ENCODE measurements at regions of chr12 and their contacts with region 1.

Region 1: GRCh38 chr12:75480469-75480949 is at the start of gene GLIPR1:
- DNase-seq: peak; percentile 86
- ATAC-seq: peak; percentile 83
- H3K4me3 Mint-ChIP-seq: peak within 1 kb of the TSS; percentile 93
- H3K27ac Mint-ChIP-seq: peak within 1 kb of the TSS; percentile 89
- H3K4me1 Mint-ChIP-seq: peaks cover 90% of the 10 kb centered on the region
- H3K27me3 Mint-ChIP-seq: no peaks in the 10 kb centered on the region
- total RNA-seq, gene GLIPR1: 8.7 to 9.3 TPM

Region 2: DNA sequence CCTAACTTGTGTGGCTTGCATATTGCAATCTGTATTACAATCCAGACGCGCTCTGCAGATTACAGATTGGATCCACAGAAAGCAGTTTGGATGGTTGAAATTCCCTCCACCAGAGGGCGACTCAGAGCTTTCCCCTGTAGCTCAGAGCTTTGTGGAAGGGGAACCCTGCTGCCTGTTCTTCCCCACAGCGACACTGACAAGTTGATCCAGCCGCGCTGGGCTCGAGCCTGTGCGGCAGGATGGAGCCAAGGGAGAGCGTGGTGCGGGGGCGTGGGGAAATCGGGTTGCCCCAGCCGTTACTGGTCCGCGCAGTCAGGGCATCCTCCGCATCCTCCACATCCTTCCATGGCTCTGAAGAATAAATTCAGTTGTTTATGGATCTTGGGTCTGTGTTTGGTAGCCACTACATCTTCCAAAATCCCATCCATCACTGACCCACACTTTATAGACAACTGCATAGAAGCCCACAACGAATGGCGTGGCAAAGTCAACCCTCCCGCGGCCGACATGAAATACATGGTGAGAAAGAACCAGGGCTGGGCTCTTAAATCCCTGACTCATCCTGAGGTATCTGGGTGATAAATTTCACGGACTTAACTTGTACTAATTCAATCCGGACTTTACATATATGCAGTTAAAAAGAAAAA is 146.0 kb before region 1 on chr12 and contains the start of gene GLIPR1L1:
- CTCF ChIA-PET with region 1: interaction called, 15 read pairs
- POLR2A ChIA-PET with region 1: interaction called, 3 read pairs
- intact Hi-C with region 1: loop called (anchors 2 kb)
- DNase-seq: peak; percentile 91
- ATAC-seq: peak; percentile 82
- H3K4me3 Mint-ChIP-seq: peak within 1 kb of the TSS; percentile 61
- H3K27ac Mint-ChIP-seq: no peak within 1 kb of the TSS
- H3K4me1 Mint-ChIP-seq: peaks cover 25% of the 10 kb centered on the region
- H3K27me3 Mint-ChIP-seq: peaks cover 21% of the 10 kb centered on the region
- total RNA-seq, gene GLIPR1L1: not detected

Region 3: DNA sequence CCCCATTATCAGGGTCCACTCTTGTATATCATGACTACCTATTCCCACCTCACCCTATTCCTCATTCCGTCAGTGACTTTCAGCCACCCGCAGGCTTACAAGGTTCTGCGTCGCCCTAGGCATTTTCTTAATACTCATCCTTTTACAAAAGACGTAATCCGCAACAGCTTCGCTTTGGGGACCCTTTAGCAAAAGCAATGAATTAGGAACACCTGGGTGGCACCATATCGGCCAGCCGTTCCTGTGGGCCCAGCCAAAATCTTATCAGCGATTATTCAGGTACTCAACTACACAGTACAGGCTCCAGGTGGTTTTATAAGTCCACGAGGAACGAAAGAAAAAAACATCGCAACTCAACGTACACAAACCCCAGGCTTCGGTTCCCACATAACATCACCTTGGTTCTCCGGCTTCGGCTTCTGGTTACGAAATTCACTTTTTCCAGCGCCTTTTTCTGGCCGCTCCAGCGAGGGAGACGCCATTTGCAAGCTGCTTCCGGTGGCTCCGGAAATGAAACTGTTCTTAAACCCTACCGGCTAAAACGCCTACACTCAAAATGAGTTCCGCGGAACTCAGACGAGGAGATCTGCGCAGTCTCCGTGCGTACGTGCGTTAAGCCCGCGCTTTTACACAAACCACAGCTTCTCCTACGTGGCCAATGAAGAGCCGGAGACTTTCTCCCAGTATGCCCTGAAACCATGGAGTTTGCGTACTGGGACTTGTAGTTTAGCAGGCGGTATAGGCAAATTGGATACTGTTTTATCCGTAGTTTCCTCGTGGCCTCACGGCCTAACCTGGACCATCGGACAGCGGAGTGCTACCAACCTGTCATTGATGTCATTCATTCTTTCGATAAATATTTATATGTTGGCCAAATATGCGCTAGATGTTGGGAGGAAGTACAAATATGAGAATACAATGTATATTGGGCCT is 30.9 kb after region 1 on chr12 and contains the start of gene KRR1:
- CTCF ChIA-PET with region 1: interaction called, 35 read pairs
- POLR2A ChIA-PET with region 1: interaction called, 9 read pairs
- intact Hi-C with region 1: loop called (anchors 1 kb)
- DNase-seq: peak; percentile 94
- ATAC-seq: peak; percentile 96
- H3K4me3 Mint-ChIP-seq: peak within 1 kb of the TSS; percentile 100
- H3K27ac Mint-ChIP-seq: peak within 1 kb of the TSS; percentile 99
- H3K4me1 Mint-ChIP-seq: peaks cover 33% of the 10 kb centered on the region
- H3K27me3 Mint-ChIP-seq: no peaks in the 10 kb centered on the region
- total RNA-seq, gene KRR1: 122 to 147 TPM

Region 4: DNA sequence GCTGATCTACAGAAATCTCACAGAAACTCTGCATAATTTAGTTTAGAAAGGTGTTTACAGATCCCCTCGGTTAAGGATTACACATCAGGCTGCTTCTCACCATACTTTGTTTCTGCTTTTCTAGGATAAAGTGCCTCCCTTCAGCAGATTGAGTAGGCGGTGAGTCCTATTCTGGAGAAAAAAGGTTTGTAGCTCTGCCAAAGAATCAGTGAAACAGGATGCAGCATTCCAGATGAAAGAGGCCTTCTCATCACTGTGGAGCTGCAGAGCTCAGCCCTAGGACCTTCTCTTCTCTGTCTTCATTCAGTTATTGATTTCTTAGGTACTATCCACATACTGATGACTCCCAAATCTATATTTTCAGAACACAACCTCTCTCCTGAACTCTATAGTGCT is 186.4 kb after region 1 on chr12:
- CTCF ChIA-PET with region 1: no interaction called
- POLR2A ChIA-PET with region 1: no interaction called
- intact Hi-C with region 1: no loop called
- DNase-seq: no peak
- ATAC-seq: no peak
- H3K4me3 Mint-ChIP-seq: no peak overlapping the region
- H3K27ac Mint-ChIP-seq: no peak overlapping the region
- H3K4me1 Mint-ChIP-seq: no peaks in the 10 kb centered on the region
- H3K27me3 Mint-ChIP-seq: no peaks in the 10 kb centered on the region

Region 5: GRCh38 chr12:75837700-75838099 is 357.2 kb after region 1 on chr12:
- CTCF ChIA-PET with region 1: no interaction called
- POLR2A ChIA-PET with region 1: no interaction called
- intact Hi-C with region 1: no loop called
- DNase-seq: no peak
- ATAC-seq: no peak
- H3K4me3 Mint-ChIP-seq: no peak overlapping the region
- H3K27ac Mint-ChIP-seq: no peak overlapping the region
- H3K4me1 Mint-ChIP-seq: peaks cover 7% of the 10 kb centered on the region
- H3K27me3 Mint-ChIP-seq: peaks cover 8% of the 10 kb centered on the region

Region 6: GRCh38 chr12:75933101-75933500 is 452.6 kb after region 1 on chr12:
- CTCF ChIA-PET with region 1: no interaction called
- POLR2A ChIA-PET with region 1: interaction called, 3 read pairs
- intact Hi-C with region 1: loop called (anchors 1 to 2 kb)
- DNase-seq: no peak
- ATAC-seq: no peak
- H3K4me3 Mint-ChIP-seq: no peak overlapping the region
- H3K27ac Mint-ChIP-seq: peak overlapping the region; percentile 3
- H3K4me1 Mint-ChIP-seq: peaks cover 26% of the 10 kb centered on the region
- H3K27me3 Mint-ChIP-seq: peaks cover 17% of the 10 kb centered on the region

Region 7: DNA sequence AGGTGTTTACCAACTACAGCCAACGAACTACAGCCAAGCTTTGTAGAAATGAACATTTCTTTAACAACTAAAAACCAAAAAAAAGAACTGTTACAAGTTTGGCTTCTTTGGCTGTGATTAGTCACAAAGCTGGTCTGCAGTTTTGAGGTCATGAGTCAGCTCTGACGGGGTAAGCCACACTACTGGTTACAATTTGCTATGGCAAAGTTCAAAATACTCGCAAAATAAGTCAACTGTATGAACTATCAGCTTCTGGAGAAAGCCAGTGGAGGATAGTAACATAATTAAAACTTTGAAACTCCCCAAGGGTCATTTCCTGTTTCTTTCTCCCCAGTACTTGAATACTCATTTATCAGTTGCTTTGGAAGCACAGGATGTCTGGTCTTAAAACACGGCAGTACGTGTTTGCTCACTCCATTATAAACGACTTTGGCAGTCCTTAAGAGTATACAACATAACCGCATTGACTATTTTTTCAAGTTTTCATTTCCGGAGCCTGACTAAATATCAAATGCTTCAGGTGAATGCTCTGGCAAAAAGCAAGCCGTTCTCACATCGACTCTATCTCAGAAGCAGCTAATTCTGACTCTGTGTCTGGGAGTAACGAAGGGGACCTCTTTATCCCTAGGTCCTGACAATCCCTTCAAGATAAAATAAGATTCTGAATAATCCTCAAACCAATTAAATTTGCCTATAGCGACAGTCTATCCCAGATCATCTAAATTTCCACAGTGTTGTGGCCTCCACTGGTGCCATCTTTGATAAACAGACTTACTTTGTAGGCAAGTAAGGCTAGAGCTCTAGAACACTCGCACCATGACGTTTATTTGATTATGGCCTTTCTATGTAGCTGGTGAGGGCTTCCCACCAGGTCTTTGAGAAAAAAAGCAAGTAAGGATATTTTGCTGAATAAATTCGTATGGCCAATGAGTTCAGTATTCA is 540.5 kb after region 1 on chr12:
- CTCF ChIA-PET with region 1: interaction called, 4 read pairs
- POLR2A ChIA-PET with region 1: interaction called, 8 read pairs
- intact Hi-C with region 1: loop called (anchors 1 kb)
- DNase-seq: peak; percentile 88
- ATAC-seq: peak; percentile 79
- H3K4me3 Mint-ChIP-seq: peak overlapping the region; percentile 54
- H3K27ac Mint-ChIP-seq: peak overlapping the region; percentile 99
- H3K4me1 Mint-ChIP-seq: peaks cover 56% of the 10 kb centered on the region
- H3K27me3 Mint-ChIP-seq: peaks cover 1% of the 10 kb centered on the region

Region 8: DNA sequence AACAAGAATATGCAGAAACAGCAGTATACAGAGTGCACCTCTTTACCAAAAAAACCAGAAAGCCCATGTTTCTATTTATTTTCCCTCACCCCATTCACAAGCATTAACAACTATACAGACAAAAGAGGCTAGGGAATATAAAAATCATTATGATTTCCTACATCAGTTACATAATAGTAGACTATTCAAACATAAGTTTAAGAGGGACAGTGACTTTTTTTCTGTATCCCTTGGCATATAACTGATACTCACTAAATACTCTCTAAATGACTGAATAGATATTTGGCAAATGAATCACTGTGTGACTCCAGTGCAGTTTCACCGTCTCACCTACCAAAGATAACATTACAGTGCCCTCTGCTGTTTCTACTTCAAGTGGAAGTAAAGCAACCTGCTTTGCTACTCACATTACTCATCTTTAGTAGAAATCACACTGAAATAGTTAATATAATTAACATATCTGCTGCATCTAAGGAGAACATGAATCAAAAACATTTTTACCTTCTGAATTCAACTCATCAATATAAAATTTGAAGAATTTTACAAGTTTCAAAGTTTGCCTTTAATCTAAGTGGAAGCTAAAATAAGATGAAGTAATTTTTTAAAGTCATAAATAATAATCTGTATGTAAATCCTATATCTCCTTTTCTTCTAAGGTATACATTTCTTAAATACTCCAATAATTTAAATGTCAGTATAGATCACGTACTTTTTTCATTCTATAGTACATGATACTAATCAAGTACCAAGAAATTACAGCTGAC is 975.3 kb after region 1 on chr12:
- CTCF ChIA-PET with region 1: interaction called, 8 read pairs
- POLR2A ChIA-PET with region 1: no interaction called
- intact Hi-C with region 1: loop called in 1 of 2 experiments (anchors 10 kb)
- DNase-seq: peak; percentile 31
- ATAC-seq: peak; percentile 99
- H3K4me3 Mint-ChIP-seq: no peak overlapping the region
- H3K27ac Mint-ChIP-seq: no peak overlapping the region
- H3K4me1 Mint-ChIP-seq: peaks cover 33% of the 10 kb centered on the region
- H3K27me3 Mint-ChIP-seq: no peaks in the 10 kb centered on the region

Measured in activated CD4-positive, alpha-beta T cell treated with anti-CD3 and anti-CD28 coated beads for 36 hours (primary cell).